WTC11 (cell line): ENCODE measurements at regions of chr11 and their contacts with region 1.

Region 1: GRCh38 chr11:19951558-19952115 is 208.6 kb downstream of the DBX1 start:
- DNase-seq: no peak
- ATAC-seq: peak; percentile 5; the same call in 1 of the 2 replicates
- H3K4me3 Mint-ChIP-seq: no peak overlapping the region
- H3K27ac Mint-ChIP-seq: no peak overlapping the region; the same call in 1 of the 2 replicates
- H3K4me1 Mint-ChIP-seq: peaks cover 46% of the 10 kb centered on the region
- H3K27me3 Mint-ChIP-seq: no peaks in the 10 kb centered on the region
- CTCF ChIP-seq: peak; percentile 36

Region 2: GRCh38 chr11:19938169-19938856 is 13.3 kb before region 1 on chr11:
- CTCF ChIA-PET with region 1: interaction called, 10 read pairs
- POLR2A ChIA-PET with region 1: no interaction called
- DNase-seq: peak; percentile 76
- ATAC-seq: peak; percentile 72
- H3K4me3 Mint-ChIP-seq: no peak overlapping the region
- H3K27ac Mint-ChIP-seq: no peak overlapping the region
- H3K4me1 Mint-ChIP-seq: peaks cover 11% of the 10 kb centered on the region
- H3K27me3 Mint-ChIP-seq: no peaks in the 10 kb centered on the region
- CTCF ChIP-seq: peak; percentile 89

Region 3: DNA sequence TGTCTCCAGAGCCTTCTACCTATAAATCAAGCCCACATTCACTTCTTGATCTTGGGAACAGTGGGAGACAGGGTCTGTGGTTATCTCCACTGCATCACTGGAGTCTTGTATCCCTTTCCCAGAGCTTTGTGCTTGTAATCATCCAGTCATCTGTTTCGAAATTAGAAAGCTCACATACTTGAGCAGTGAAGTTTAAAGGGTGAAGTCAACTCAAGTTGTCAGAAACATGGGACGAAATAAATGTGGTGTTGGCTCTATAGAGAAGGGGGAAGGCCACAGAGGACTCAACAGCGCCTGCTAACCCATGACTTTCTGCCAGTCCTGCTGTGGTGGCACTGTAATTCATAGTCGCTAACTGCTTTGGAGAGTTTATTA is 11.2 kb after region 1 on chr11:
- CTCF ChIA-PET with region 1: interaction called, 20 read pairs
- POLR2A ChIA-PET with region 1: no interaction called
- DNase-seq: no peak
- ATAC-seq: no peak
- H3K4me3 Mint-ChIP-seq: no peak overlapping the region
- H3K27ac Mint-ChIP-seq: no peak overlapping the region
- H3K4me1 Mint-ChIP-seq: no peaks in the 10 kb centered on the region
- H3K27me3 Mint-ChIP-seq: no peaks in the 10 kb centered on the region
- CTCF ChIP-seq: no peak

Region 4: DNA sequence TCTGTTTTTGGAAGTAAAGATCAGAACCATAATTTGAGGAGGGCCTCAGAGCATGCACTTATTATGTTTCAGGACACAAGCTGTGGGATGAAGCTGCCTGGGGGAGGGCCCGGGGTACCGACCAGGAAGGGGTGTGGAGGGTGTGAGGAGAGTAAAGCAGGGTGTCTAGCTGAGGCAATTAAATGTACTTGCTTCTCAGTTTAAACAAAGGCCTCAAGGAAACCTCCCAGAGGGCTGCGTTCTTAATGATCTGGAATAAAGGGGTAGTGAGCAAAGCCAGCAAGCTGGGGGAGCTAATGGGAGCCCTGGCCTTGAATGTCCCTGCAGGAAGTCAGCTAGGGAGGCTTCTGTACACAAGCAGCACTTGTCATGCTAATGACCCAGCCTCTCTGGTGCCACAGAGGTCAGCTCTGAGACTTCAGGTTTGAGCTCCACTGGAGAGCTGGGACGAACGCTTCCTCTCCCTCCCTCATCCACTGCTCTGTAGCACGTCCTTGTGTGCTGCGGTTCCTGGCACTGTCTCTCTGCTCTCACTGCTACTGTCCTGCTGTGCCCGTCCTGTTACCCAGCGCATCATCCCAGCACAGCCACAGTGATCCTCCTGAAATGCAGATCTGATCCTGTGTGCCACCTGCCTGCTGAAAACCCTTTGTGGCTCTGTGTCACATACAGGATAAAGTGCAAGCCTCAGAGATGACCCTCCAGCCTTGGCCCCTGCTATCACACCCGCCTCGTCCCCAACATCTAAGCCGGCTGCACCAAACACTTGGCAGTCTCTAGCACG is 48.9 kb after region 1 on chr11:
- CTCF ChIA-PET with region 1: interaction called, 14 read pairs
- POLR2A ChIA-PET with region 1: interaction called, 4 read pairs
- DNase-seq: peak; percentile 83
- ATAC-seq: peak; percentile 96
- H3K4me3 Mint-ChIP-seq: peak overlapping the region; percentile 40
- H3K27ac Mint-ChIP-seq: peak overlapping the region; percentile 89
- H3K4me1 Mint-ChIP-seq: peaks cover 58% of the 10 kb centered on the region
- H3K27me3 Mint-ChIP-seq: peaks cover 76% of the 10 kb centered on the region
- CTCF ChIP-seq: no peak

Region 5: DNA sequence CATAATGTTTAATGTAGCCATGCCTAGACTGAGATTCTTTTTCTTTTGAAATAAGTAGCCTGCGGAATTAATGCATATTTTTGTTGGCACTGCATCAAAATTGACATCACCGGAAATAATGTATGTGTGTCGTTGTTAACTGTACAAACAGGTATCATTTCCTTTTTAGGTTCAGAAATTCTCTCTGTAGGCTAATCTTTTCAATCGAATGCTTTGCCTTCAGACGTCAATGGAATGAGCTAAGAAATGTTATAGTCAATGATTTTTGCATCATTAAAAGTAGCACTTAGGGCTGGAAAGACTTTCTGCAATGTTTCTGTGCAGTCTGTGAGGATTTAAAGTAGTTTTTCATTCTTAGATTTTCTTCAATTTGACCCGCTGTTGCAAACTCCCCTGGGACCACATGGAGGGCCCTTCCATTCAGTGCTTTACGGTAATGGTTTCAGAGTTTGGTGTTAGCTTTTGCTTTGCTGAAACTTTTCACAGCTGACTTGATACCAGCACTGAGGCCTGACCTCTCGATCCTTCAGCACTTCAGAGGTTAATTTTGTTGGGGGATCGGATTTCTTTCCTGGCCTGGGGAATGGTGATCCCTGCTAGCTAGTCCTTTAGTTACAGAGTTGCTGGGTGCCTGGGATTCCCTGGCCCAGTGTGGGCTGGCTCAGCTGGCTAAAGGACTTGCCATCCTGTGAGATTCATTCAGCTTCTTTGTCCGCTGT is 70.9 kb after region 1 on chr11:
- CTCF ChIA-PET with region 1: interaction called, 35 read pairs
- POLR2A ChIA-PET with region 1: interaction called, 4 read pairs
- DNase-seq: peak; percentile 61
- ATAC-seq: peak; percentile 40
- H3K4me3 Mint-ChIP-seq: peak overlapping the region; percentile 72
- H3K27ac Mint-ChIP-seq: peak overlapping the region; percentile 96
- H3K4me1 Mint-ChIP-seq: peaks cover 47% of the 10 kb centered on the region
- H3K27me3 Mint-ChIP-seq: no peaks in the 10 kb centered on the region
- CTCF ChIP-seq: no peak

Region 6: GRCh38 chr11:20050551-20051333 is 99.1 kb after region 1 on chr11:
- CTCF ChIA-PET with region 1: interaction called, 38 read pairs
- POLR2A ChIA-PET with region 1: no interaction called
- DNase-seq: peak; percentile 24
- ATAC-seq: peak; percentile 75
- H3K4me3 Mint-ChIP-seq: peak overlapping the region; percentile 25
- H3K27ac Mint-ChIP-seq: peak overlapping the region; percentile 81
- H3K4me1 Mint-ChIP-seq: peaks cover 35% of the 10 kb centered on the region
- H3K27me3 Mint-ChIP-seq: no peaks in the 10 kb centered on the region
- CTCF ChIP-seq: no peak